Activated T-helper 1 cell treated with anti-CD3 and anti-CD28 coated beads, Interleukin-12 subunit alpha, Interleukin-12 subunit beta, Interleukin-2, Interleukin-4 antibody, amounts not matched to agents 30 ng/mL and 10 ng/mL and 1 ng/mL, durations not matched to agents 14 hours and 24 hours and 36 hours (primary cell): ENCODE measurements at regions of chr3 and their contacts with region 1.

Region 1: GRCh38 chr3:122146466-122146865 is 37.0 kb upstream of the CASR start:
- DNase-seq: peak; percentile 62
- H3K4me3 Mint-ChIP-seq: peak overlapping the region; percentile 0
- H3K27ac Mint-ChIP-seq: peak overlapping the region; percentile 69
- H3K4me1 Mint-ChIP-seq: peaks cover 23% of the 10 kb centered on the region
- H3K27me3 Mint-ChIP-seq: peaks cover 2% of the 10 kb centered on the region

Region 2: GRCh38 chr3:121735047-121735696 is 411.3 kb before region 1 on chr3:
- intact Hi-C with region 1: loop called (anchors 5 kb)
- DNase-seq: no peak
- H3K4me3 Mint-ChIP-seq: no peak overlapping the region
- H3K27ac Mint-ChIP-seq: peak overlapping the region; percentile 36
- H3K4me1 Mint-ChIP-seq: peaks cover 41% of the 10 kb centered on the region
- H3K27me3 Mint-ChIP-seq: no peaks in the 10 kb centered on the region

Region 3: GRCh38 chr3:122030381-122031122 is 115.9 kb before region 1 on chr3:
- intact Hi-C with region 1: loop called (anchors 1 kb)
- DNase-seq: peak; percentile 27
- H3K4me3 Mint-ChIP-seq: peak overlapping the region; percentile 20
- H3K27ac Mint-ChIP-seq: peak overlapping the region; percentile 85
- H3K4me1 Mint-ChIP-seq: peaks cover 17% of the 10 kb centered on the region
- H3K27me3 Mint-ChIP-seq: peaks cover 5% of the 10 kb centered on the region

Region 4: GRCh38 chr3:122200661-122201060 is 54.2 kb after region 1 on chr3:
- intact Hi-C with region 1: loop called (anchors 2 kb)
- DNase-seq: no peak
- H3K4me3 Mint-ChIP-seq: no peak overlapping the region
- H3K27ac Mint-ChIP-seq: no peak overlapping the region
- H3K4me1 Mint-ChIP-seq: no peaks in the 10 kb centered on the region
- H3K27me3 Mint-ChIP-seq: peaks cover 13% of the 10 kb centered on the region

Region 5: GRCh38 chr3:122322095-122323075 is 175.9 kb after region 1 on chr3:
- intact Hi-C with region 1: loop called (anchors 1 kb)
- DNase-seq: peak; percentile 60
- H3K4me3 Mint-ChIP-seq: no peak overlapping the region
- H3K27ac Mint-ChIP-seq: peak overlapping the region; percentile 57
- H3K4me1 Mint-ChIP-seq: peaks cover 40% of the 10 kb centered on the region
- H3K27me3 Mint-ChIP-seq: peaks cover 13% of the 10 kb centered on the region

Region 6: DNA sequence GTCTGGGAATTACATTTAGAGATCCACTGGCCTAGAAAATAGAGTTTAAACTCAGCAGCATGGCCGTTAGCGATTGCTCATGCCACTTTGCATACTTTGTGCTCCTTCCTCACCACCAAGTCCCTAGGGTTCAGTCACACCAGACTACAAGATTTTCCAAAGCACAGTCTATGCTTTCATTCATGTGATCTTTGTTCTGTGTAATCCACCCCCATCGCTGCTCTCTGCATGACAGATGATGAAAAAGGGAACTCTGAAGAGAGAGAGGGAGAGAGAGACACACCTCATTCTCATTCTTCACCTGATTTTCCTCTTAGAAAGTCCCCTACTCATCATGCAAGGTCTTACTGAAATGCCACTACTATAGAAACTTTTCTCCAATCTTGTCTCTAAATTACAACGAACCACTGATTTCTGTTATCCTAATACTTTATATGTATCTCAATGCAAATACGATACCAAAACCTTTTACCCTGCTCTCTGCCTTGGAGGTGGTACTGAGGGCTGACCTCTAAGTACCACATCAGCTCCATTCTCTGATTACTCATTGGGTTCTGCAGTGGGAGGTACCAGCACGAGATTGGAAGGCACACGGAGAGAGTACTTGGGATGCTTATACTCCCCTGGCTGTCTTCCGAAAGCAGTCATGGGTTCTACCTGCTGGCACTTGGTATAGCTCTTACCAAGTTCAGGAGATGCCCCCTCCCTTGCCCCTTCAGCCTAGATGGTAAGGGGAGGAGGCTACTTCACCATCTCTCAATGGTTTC is 429.9 kb after region 1 on chr3:
- intact Hi-C with region 1: loop called (anchors 1 kb)
- DNase-seq: no peak
- H3K4me3 Mint-ChIP-seq: peak overlapping the region; percentile 25
- H3K27ac Mint-ChIP-seq: peak overlapping the region; percentile 77
- H3K4me1 Mint-ChIP-seq: peaks cover 59% of the 10 kb centered on the region
- H3K27me3 Mint-ChIP-seq: no peaks in the 10 kb centered on the region